ENCODE measurements at regions of chr12 and their contacts with region 1.

Region 1: GRCh38 chr12:95072900-95073697 is at the start of gene NR2C1:
- DNase-seq: peak; percentile 96
- ATAC-seq: peak; percentile 99
- H3K4me3 ChIP-seq: peak within 1 kb of the TSS; percentile 69 to 94 (median 88)
- H3K4me3 Mint-ChIP-seq: peak within 1 kb of the TSS; percentile 97
- H3K27ac ChIP-seq: peak within 1 kb of the TSS; percentile 65 to 84
- H3K27ac Mint-ChIP-seq: peak within 1 kb of the TSS; percentile 91
- H3K4me1 ChIP-seq: peaks cover 0 to 14% of the 10 kb centered on the region in 2 donors
- H3K4me1 Mint-ChIP-seq: peaks cover 11% of the 10 kb centered on the region
- H3K27me3 ChIP-seq: no peaks in the 10 kb centered on the region
- H3K27me3 Mint-ChIP-seq: no peaks in the 10 kb centered on the region
- CTCF ChIP-seq: no peak
- total RNA-seq, gene NR2C1: 53.9 and 55.4 TPM in 2 replicates

Region 2: GRCh38 chr12:93378373-93379325 is 1694.5 kb before region 1 on chr12:
- CTCF ChIA-PET with region 1: no interaction called
- POLR2A ChIA-PET with region 1: no interaction called
- intact Hi-C with region 1: loop called (anchors 2 kb)
- DNase-seq: peak; percentile 76
- ATAC-seq: peak; percentile 44
- H3K4me3 ChIP-seq: peak overlapping the region; percentile 73 to 96 (median 86)
- H3K4me3 Mint-ChIP-seq: peak overlapping the region; percentile 98
- H3K27ac ChIP-seq: peak overlapping the region; percentile 75 to 89
- H3K27ac Mint-ChIP-seq: peak overlapping the region; percentile 98
- H3K4me1 ChIP-seq: peaks cover 20 to 29% of the 10 kb centered on the region in 2 donors
- H3K4me1 Mint-ChIP-seq: peaks cover 40% of the 10 kb centered on the region
- H3K27me3 ChIP-seq: no peaks in the 10 kb centered on the region
- H3K27me3 Mint-ChIP-seq: no peaks in the 10 kb centered on the region
- CTCF ChIP-seq: no peak

Region 3: GRCh38 chr12:94710933-94711332 is 362.2 kb before region 1 on chr12:
- CTCF ChIA-PET with region 1: interaction called, 7 read pairs
- POLR2A ChIA-PET with region 1: no interaction called
- intact Hi-C with region 1: loop called (anchors 1 kb)
- DNase-seq: peak; percentile 57
- ATAC-seq: peak; percentile 71
- H3K4me3 ChIP-seq: no peak overlapping the region
- H3K4me3 Mint-ChIP-seq: no peak overlapping the region
- H3K27ac ChIP-seq: no peak overlapping the region
- H3K27ac Mint-ChIP-seq: no peak overlapping the region
- H3K4me1 ChIP-seq: peaks cover 8 to 9% of the 10 kb centered on the region in 2 donors
- H3K4me1 Mint-ChIP-seq: peaks cover 21% of the 10 kb centered on the region
- H3K27me3 ChIP-seq: no peaks in the 10 kb centered on the region
- H3K27me3 Mint-ChIP-seq: no peaks in the 10 kb centered on the region
- CTCF ChIP-seq: peak; percentile 57

Region 4: GRCh38 chr12:94831081-94831751 is 241.9 kb before region 1 on chr12:
- CTCF ChIA-PET with region 1: no interaction called
- POLR2A ChIA-PET with region 1: no interaction called
- intact Hi-C with region 1: loop called (anchors 5 kb)
- DNase-seq: peak; percentile 86
- ATAC-seq: peak; percentile 94
- H3K4me3 ChIP-seq: peak overlapping the region in 2 of 5 experiments; percentile 5 to 23
- H3K4me3 Mint-ChIP-seq: peak overlapping the region; percentile 95
- H3K27ac ChIP-seq: peak overlapping the region; percentile 92 to 94
- H3K27ac Mint-ChIP-seq: peak overlapping the region; percentile 100
- H3K4me1 ChIP-seq: peaks cover 39% of the 10 kb centered on the region in 2 donors
- H3K4me1 Mint-ChIP-seq: peaks cover 47% of the 10 kb centered on the region
- H3K27me3 ChIP-seq: no peaks in the 10 kb centered on the region
- H3K27me3 Mint-ChIP-seq: no peaks in the 10 kb centered on the region
- CTCF ChIP-seq: no peak

Region 5: DNA sequence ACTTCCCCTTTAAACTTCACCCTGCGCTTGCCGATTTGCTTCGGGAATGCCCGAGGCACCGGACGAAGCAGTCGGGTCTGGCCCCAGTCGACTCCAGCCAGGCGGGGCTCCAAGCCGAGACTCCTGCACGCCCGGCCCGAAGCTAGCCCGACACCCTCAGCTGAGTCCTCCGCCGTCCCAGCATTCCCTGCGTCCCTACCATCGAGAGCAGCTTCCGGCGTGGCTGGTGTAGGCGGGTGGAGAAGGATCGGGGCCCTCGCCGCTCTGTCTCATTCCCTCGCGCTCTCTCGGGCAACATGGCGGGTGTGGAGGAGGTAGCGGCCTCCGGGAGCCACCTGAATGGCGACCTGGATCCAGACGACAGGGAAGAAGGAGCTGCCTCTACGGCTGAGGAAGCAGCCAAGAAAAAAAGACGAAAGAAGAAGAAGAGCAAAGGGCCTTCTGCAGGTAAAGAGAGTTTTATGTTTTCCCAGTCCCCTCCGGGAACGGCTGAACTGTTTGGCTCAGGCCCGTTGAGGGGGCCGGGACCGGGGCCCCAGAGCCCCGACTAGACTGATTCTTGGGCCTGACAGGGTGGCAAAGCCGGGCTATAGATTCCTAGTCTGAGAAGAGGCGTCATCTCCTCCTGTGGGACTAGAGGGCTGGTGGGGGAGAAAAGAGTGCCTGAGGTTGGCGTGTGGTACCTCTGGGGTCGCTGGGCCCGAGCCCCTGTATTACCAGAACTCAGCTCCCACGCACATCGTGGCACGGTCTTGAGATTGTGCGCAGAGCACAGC is 401.0 kb after region 1 on chr12 and contains the start of gene METAP2:
- CTCF ChIA-PET with region 1: interaction called, 4 read pairs
- POLR2A ChIA-PET with region 1: interaction called, 4 read pairs
- intact Hi-C with region 1: loop called (anchors 2 kb)
- DNase-seq: peak; percentile 92
- ATAC-seq: peak; percentile 97
- H3K4me3 ChIP-seq: peak within 1 kb of the TSS; percentile 71 to 98 (median 90)
- H3K4me3 Mint-ChIP-seq: peak within 1 kb of the TSS; percentile 100
- H3K27ac ChIP-seq: peak within 1 kb of the TSS; percentile 73 to 94
- H3K27ac Mint-ChIP-seq: peak within 1 kb of the TSS; percentile 99
- H3K4me1 ChIP-seq: peaks cover 16 to 17% of the 10 kb centered on the region in 2 donors
- H3K4me1 Mint-ChIP-seq: peaks cover 47% of the 10 kb centered on the region
- H3K27me3 ChIP-seq: no peaks in the 10 kb centered on the region
- H3K27me3 Mint-ChIP-seq: peaks cover 6% of the 10 kb centered on the region
- CTCF ChIP-seq: no peak
- total RNA-seq, gene METAP2: 49.9 and 64.5 TPM in 2 replicates